ENCODE measurements at regions of chr12 and their contacts with region 1.

Region 1: DNA sequence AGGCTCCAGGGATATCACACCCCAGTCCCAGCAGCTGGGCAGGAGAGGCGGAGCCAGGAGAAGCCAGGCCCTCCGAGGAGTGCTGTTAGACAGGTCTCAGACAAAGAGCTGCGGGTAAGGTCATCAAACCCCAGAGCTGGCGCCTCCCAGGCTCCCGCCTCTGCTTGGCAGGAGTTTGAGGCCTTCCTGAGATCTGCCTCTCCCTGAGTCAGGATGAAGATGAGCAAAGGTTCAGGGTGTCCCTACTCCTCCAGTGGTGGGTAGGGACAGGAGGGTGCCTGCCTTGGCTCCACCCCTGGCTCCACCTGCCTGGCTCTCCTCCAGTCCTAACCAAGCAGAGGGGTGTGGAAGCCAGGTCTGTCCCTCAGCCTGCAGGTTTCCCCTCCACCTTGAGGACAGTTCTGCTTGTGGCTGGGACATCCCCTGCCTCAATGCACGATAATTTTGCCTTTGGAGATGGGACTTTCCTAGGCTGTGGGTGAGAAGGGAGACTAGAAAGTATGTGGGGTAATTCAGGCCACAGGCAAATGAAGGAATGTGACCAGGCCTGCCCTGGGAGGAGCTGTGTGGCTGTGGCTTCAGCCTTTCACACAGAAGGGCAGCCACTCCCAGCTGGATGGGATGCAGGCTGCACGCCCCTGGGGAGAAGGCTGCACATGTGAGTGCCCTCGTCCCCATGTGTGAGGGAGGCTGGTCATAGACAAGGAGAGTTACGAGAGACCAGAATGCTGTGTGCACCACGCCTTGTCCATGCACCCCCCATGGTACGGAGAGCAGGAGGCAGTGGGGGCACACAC is 2.2 kb downstream of the PLEKHG6 start:
- DNase-seq: no peak
- H3K4me3 ChIP-seq: no peak overlapping the region
- H3K27ac ChIP-seq: no peak overlapping the region
- H3K4me1 ChIP-seq: peaks cover 0 to 9% of the 10 kb centered on the region in 2 donors
- H3K27me3 ChIP-seq: peaks cover 5 to 7% of the 10 kb centered on the region in 2 donors
- CTCF ChIP-seq: no peak
- POLR2A ChIP-seq: no peak

Region 2: GRCh38 chr12:6465467-6466183 is 152.9 kb after region 1 on chr12:
- intact Hi-C with region 1: loop called (anchors 10 kb)
- DNase-seq: peak; percentile 38 to 76
- H3K4me3 ChIP-seq: no peak overlapping the region
- H3K27ac ChIP-seq: peak overlapping the region; percentile 10 to 31
- H3K4me1 ChIP-seq: no peaks in the 10 kb centered on the region
- H3K27me3 ChIP-seq: no peaks in the 10 kb centered on the region
- CTCF ChIP-seq: peak; percentile 79 to 96 (median 90)
- POLR2A ChIP-seq: no peak